Aorta (tissue), 5 donors: ENCODE measurements at regions of chr3 and their contacts with region 1.

Region 1: GRCh38 chr3:153043729-153044328 is 118.2 kb upstream of the RAP2B start:
- DNase-seq: no peak
- ATAC-seq: peak; percentile 56
- H3K4me3 ChIP-seq: no peak overlapping the region
- H3K27ac ChIP-seq: no peak overlapping the region
- H3K4me1 ChIP-seq: no peaks in the 10 kb centered on the region
- H3K27me3 ChIP-seq: no peaks in the 10 kb centered on the region

Region 2: GRCh38 chr3:153103406-153103945 is 59.6 kb after region 1 on chr3:
- intact Hi-C with region 1: no loop called
- DNase-seq: no peak
- ATAC-seq: no peak
- H3K4me3 ChIP-seq: no peak overlapping the region
- H3K27ac ChIP-seq: no peak overlapping the region
- H3K4me1 ChIP-seq: no peaks in the 10 kb centered on the region
- H3K27me3 ChIP-seq: no peaks in the 10 kb centered on the region

Region 3: DNA sequence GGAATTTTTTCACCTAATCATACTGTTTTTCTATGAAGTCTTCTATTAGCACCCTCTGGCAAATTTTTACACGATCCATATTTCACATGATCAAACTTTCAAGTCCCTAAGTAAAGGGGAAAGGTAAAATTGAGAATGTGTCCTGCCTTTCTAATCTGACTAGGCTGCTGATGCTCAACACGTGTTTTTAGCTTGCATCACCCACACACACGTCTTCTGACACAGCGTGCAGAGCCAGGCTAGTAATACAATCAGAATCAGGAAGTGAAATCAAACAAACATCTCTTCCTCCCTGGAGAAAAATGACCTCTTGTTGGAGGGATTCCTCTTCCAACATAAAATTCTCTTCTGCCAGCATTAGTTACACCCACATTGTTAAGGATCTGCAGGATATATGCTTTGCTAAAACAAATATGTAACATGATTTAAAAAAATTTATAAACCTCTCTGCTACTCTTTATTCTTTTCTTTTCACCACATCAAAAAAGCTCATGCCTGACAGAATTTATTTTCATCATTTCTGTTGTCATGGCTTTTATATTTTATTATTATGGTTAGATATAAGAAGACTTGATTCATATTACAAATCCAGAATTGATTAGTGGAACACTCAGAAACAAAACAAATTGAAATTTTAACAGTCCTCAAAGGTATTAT is 240.6 kb after region 1 on chr3:
- intact Hi-C with region 1: loop called in 1 of 2 experiments (anchors 10 kb)
- DNase-seq: peak in 1 of 2 donors; percentile 84
- ATAC-seq: peak; percentile 88
- H3K4me3 ChIP-seq: no peak overlapping the region
- H3K27ac ChIP-seq: no peak overlapping the region
- H3K4me1 ChIP-seq: no peaks in the 10 kb centered on the region
- H3K27me3 ChIP-seq: no peaks in the 10 kb centered on the region

Region 4: DNA sequence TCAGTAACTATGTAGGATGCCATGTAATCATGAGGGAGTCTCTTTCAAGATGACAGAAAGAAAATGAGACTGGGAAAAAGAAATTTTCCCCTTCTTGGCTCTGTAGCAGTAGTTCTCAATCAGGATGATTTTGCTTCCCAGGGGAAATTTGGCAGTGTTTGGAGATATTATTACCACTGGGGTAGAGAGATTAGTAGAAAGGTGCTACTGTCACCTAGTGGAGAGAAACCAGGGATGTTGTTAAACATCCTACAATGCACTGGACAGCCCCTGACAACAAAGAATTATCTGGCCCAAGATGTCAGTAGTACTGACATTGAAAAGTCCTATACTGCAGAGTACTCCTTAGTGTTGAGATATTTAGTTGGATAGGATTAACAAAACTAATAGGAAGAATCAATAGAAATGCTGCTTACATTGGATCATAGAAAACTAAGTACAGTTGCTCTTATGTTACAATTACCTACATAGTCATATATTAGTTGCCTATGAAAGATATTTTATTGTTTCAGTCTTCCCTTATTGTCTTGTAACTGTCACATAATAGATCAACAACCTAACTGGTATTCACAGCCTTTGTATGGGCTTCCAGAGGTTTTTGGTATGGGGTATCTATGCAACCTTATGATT is 551.5 kb after region 1 on chr3:
- intact Hi-C with region 1: loop called (anchors 2 to 5 kb)
- DNase-seq: no peak
- ATAC-seq: no peak
- H3K4me3 ChIP-seq: no peak overlapping the region
- H3K27ac ChIP-seq: no peak overlapping the region
- H3K4me1 ChIP-seq: no peaks in the 10 kb centered on the region
- H3K27me3 ChIP-seq: no peaks in the 10 kb centered on the region

Region 5: GRCh38 chr3:153768561-153769469 is 725.0 kb after region 1 on chr3:
- intact Hi-C with region 1: loop called in 1 of 2 experiments (anchors 10 kb)
- DNase-seq: no peak
- ATAC-seq: peak; percentile 88
- H3K4me3 ChIP-seq: no peak overlapping the region
- H3K27ac ChIP-seq: no peak overlapping the region
- H3K4me1 ChIP-seq: no peaks in the 10 kb centered on the region
- H3K27me3 ChIP-seq: no peaks in the 10 kb centered on the region